Mucosa of descending colon (tissue), 3 donors: ENCODE measurements at regions of chr1 and their contacts with region 1.

Region 1: DNA sequence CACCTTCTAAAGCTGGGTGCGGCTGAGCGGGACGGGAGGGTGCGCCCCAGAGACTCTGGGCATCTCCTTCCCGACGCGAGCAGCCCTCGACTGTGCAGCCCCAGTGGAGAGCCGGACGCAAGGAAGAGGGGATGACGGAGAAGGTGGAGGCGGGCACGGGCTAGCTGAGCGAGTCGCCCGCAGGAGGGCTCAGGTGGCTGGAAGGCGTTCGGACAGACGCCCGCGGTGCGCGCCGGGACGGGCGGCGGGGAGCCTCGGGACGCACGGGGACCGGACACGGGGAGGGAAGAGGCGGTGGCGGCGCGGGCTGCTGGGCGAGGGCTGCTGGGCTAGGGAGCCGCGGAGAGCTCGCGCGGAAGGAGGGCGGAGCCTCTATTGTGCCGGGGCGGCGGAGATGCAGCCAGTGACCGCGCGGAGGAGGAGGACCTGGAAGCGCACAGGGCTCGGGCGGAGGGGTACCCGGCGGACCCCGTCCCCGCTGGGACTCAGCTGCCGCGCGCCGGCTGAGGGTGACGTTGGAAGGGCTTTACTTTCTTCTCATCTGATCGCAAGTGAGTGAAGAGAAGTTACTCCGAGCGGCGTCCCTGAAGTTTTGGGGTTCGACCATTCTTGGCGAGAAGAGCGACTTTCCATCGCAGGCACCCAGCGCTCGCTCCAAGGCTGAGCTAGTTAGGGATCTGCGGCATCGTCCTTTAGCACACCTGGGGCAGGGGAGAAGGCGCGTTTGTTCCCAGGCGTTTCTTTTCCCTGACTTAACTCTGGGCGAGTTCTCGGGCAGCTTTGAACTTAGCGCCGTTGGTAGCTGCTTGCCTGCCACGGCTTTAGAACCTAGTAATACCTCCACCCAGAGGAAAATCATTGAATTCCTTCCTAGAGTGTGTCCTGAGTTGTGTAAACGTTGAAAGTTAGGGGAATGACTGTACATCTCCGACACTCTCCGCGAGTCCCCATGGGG is at the start of gene OLFML2B:
- DNase-seq: peak; percentile 65 to 75 (median 70)
- ATAC-seq: peak; percentile 91
- H3K4me3 ChIP-seq: no peak within 1 kb of the TSS
- H3K4me1 ChIP-seq: no peaks in the 10 kb centered on the region
- CTCF ChIP-seq: no peak
- total RNA-seq, gene OLFML2B: 1.4 to 29.6 (median 5.0) TPM

Region 2: GRCh38 chr1:161792740-161793139 is 231.1 kb before region 1 on chr1:
- intact Hi-C with region 1: loop called in 1 of 2 experiments (anchors 5 kb)
- DNase-seq: peak in 1 of 3 donors; percentile 23
- ATAC-seq: peak; percentile 71
- H3K4me3 ChIP-seq: no peak overlapping the region
- H3K4me1 ChIP-seq: no peaks in the 10 kb centered on the region
- CTCF ChIP-seq: peak; percentile 19

Region 3: GRCh38 chr1:161973924-161974845 is 49.6 kb before region 1 on chr1:
- intact Hi-C with region 1: loop called in 1 of 2 experiments (anchors 10 kb)
- DNase-seq: no peak
- ATAC-seq: no peak
- H3K4me3 ChIP-seq: no peak overlapping the region
- H3K4me1 ChIP-seq: no peaks in the 10 kb centered on the region
- CTCF ChIP-seq: no peak

Region 4: DNA sequence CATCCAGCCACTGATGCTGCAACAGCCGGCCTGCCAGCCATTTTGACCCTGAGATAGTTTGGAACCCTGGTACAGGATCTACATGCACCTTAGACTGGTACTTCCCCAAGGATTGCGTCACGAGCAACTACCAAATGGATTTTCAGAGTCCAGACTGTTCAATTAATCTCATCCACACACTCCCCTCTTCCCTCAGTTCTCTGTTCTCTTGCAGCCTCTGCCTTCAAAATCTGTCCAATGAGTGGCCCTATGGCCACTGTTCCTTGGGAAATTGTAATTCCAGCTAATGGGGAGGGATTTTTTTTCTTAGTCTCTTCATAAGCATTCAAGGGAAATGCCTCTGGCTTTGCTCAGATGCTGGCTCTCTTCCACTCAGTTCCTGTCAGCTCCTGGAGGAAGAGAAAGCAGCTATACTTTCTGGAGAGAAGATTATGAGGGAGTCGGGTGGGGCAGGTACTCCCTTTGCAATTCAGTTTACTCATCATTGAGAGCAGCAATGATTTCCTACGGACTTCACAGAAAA is 517.9 kb after region 1 on chr1:
- intact Hi-C with region 1: no loop called
- DNase-seq: peak in 1 of 3 donors; percentile 15
- ATAC-seq: peak; percentile 31
- H3K4me3 ChIP-seq: no peak overlapping the region
- H3K4me1 ChIP-seq: no peaks in the 10 kb centered on the region
- CTCF ChIP-seq: no peak